Right ventricle myocardium inferior (tissue), 1 donor: ENCODE measurements at regions of chr15 and their contacts with region 1.

Region 1: GRCh38 chr15:85831415-85832113 is 36.8 kb upstream of the KLHL25 start:
- DNase-seq: peak; percentile 74
- ATAC-seq: peak; percentile 93

Region 2: GRCh38 chr15:85485956-85486567 is 345.5 kb before region 1 on chr15:
- intact Hi-C with region 1: loop called (anchors 10 kb)
- DNase-seq: no peak
- ATAC-seq: peak; percentile 51

Region 3: GRCh38 chr15:85730001-85730820 is 101.4 kb before region 1 on chr15:
- intact Hi-C with region 1: loop called (anchors 2 kb)
- DNase-seq: no peak
- ATAC-seq: peak; percentile 54

Region 4: GRCh38 chr15:85750319-85750806 is 81.2 kb before region 1 on chr15:
- intact Hi-C with region 1: loop called (anchors 5 kb)
- DNase-seq: peak; percentile 88
- ATAC-seq: peak; percentile 75

Region 5: GRCh38 chr15:86295511-86295910 is 463.9 kb after region 1 on chr15:
- intact Hi-C with region 1: no loop called
- DNase-seq: no peak
- ATAC-seq: no peak